PC-3 (cell line): ENCODE measurements at regions of chr3 and their contacts with region 1.

Region 1: GRCh38 chr3:122514123-122515019 is at the start of gene KPNA1:
- DNase-seq: peak; percentile 96
- ATAC-seq: peak; percentile 91
- H3K4me3 ChIP-seq: peak within 1 kb of the TSS; percentile 71
- H3K27ac ChIP-seq: peak within 1 kb of the TSS; percentile 87
- H3K4me1 ChIP-seq: peaks cover 20% of the 10 kb centered on the region
- H3K27me3 ChIP-seq: no peaks in the 10 kb centered on the region
- CTCF ChIP-seq: no peak
- total RNA-seq, gene KPNA1: 64.3 and 76.7 TPM in 2 replicates

Region 2: DNA sequence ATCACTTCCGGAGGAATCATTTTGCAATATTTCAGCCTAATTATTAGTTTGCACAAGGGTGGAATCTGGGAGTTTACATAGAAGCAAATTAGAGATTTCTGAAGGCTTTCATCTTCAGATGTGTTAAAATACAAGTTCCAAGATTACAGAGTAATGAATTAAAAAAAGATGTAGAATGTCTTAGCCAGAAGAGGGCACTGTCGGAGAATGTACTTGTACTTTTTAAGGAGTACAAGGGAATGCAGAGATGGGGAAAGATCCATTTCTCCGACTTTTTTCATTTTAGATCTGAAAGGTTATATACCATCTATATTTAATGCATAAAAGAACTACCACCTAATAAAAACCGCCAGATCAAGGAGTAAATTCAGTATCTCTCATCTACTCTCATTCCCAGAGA is 55.4 kb before region 1 on chr3:
- CTCF ChIA-PET with region 1: interaction called, 4 read pairs
- POLR2A ChIA-PET with region 1: no interaction called
- intact Hi-C with region 1: loop called (anchors 5 kb)
- DNase-seq: peak; percentile 75
- ATAC-seq: peak; percentile 81
- H3K4me3 ChIP-seq: no peak overlapping the region
- H3K27ac ChIP-seq: no peak overlapping the region
- H3K4me1 ChIP-seq: no peaks in the 10 kb centered on the region
- H3K27me3 ChIP-seq: no peaks in the 10 kb centered on the region
- CTCF ChIP-seq: peak; percentile 83

Region 3: DNA sequence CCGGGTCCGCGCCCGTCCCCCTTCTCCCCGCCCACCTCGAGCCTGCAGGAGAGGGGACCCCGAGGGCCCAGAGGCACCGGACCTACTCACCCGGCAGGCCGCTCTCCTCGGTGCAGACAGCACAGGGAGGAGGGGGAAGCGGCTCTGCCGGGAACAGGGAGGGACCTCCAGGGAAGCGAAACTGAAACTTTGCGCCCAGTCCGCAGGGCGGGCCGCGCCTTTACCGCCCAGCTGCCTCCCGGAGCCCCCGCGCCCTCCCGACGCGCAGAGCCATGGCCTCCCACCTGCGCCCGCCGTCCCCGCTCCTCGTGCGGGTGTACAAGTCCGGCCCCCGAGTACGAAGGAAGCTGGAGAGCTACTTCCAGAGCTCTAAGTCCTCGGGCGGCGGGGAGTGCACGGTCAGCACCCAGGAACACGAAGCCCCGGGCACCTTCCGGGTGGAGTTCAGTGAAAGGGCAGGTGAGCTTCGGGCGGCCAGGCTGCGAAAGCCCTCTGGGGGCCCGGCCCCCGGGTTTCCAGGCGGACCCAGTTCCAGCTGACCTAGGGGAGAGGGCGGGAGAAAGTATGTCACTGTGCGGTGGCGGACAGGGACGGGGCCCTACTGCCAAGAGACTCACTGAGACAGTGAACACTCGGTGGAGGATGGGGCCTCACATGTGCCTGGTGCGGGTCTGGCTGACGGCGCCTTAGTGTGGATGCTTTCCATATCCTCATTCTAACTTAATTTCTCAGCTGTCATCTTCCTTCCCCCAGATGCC is 50.0 kb after region 1 on chr3 and contains the starts of genes DTX3L and PARP9:
- CTCF ChIA-PET with region 1: no interaction called
- POLR2A ChIA-PET with region 1: no interaction called
- intact Hi-C with region 1: loop called (anchors 2 kb)
- DNase-seq: peak; percentile 83
- ATAC-seq: peak; percentile 89
- H3K4me3 ChIP-seq: peak within 1 kb of the TSS; percentile 81
- H3K27ac ChIP-seq: peak within 1 kb of the TSS; percentile 81
- H3K4me1 ChIP-seq: peaks cover 20% of the 10 kb centered on the region
- H3K27me3 ChIP-seq: no peaks in the 10 kb centered on the region
- CTCF ChIP-seq: no peak
- total RNA-seq, gene DTX3L: 11.1 and 11.9 TPM in 2 replicates
- total RNA-seq, gene PARP9: 13.8 and 14.8 TPM in 2 replicates

Region 4: DNA sequence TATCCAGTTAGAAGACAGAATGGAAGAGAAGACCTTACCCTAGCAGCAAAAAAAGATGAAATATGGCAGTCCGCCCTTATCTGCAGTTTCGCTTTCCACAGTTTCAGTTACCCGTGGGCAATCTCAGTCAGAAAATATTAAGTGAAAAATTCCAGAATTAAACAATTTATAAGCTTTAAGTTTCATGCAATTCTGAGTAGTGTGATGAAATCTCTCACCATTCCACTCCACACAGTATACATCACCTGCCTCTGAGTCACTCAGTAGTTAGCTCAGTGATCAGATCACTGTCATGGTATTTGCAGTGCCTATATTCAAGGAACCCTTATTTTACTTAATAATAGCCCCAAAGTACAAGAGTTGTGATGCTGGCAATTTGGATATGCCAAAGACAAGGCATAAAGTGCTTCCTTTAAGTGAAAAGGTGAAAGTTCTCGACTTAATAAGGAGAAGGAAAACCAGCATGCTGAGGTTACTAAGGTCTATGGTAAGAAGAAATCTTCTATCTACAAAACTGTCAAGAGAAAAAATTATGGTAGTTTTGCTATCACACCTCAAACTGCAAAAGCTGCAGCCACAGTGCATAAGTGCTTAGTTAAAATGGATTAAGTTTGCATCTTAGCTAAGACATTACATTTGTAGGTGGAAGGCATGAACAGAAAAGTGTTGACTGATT is 231.1 kb after region 1 on chr3:
- CTCF ChIA-PET with region 1: no interaction called
- POLR2A ChIA-PET with region 1: interaction called, 11 read pairs
- intact Hi-C with region 1: no loop called
- DNase-seq: peak; percentile 43
- ATAC-seq: peak; percentile 95
- H3K4me3 ChIP-seq: no peak overlapping the region
- H3K27ac ChIP-seq: no peak overlapping the region
- H3K4me1 ChIP-seq: 0 out of 2 replicates have a peak, but pooled peaks cover 4% of the 10 kb centered on the region
- H3K27me3 ChIP-seq: no peaks in the 10 kb centered on the region
- CTCF ChIP-seq: no peak

Region 5: GRCh38 chr3:122890077-122890719 is 375.8 kb after region 1 on chr3:
- CTCF ChIA-PET with region 1: no interaction called
- POLR2A ChIA-PET with region 1: no interaction called
- intact Hi-C with region 1: no loop called
- DNase-seq: peak; percentile 39
- ATAC-seq: no peak
- H3K4me3 ChIP-seq: no peak overlapping the region
- H3K27ac ChIP-seq: no peak overlapping the region
- H3K4me1 ChIP-seq: peaks cover 19% of the 10 kb centered on the region
- H3K27me3 ChIP-seq: no peaks in the 10 kb centered on the region
- CTCF ChIP-seq: no peak

Region 6: GRCh38 chr3:123284399-123285010 is 770.1 kb after region 1 on chr3:
- CTCF ChIA-PET with region 1: no interaction called
- POLR2A ChIA-PET with region 1: no interaction called
- intact Hi-C with region 1: no loop called
- DNase-seq: no peak
- ATAC-seq: no peak; the same call in 1 of the 2 replicates
- H3K4me3 ChIP-seq: no peak overlapping the region
- H3K27ac ChIP-seq: no peak overlapping the region
- H3K4me1 ChIP-seq: peaks cover 13% of the 10 kb centered on the region; the same call in 1 of the 2 replicates
- H3K27me3 ChIP-seq: 0 out of 2 replicates have a peak, but pooled peaks cover 6% of the 10 kb centered on the region
- CTCF ChIP-seq: no peak